Naive thymus-derived CD4-positive, alpha-beta T cell (primary cell): ENCODE measurements at regions of chr20 and their contacts with region 1.

Region 1: GRCh38 chr20:3209257-3209945 is at the start of gene ITPA:
- DNase-seq: peak; percentile 26 to 67 (median 42)
- ATAC-seq: peak; percentile 44
- H3K4me3 ChIP-seq: peak within 1 kb of the TSS; percentile 94
- H3K4me3 Mint-ChIP-seq: peak within 1 kb of the TSS; percentile 85 to 100 (median 96)
- H3K27ac ChIP-seq: peak within 1 kb of the TSS; percentile 85
- H3K27ac Mint-ChIP-seq: peak within 1 kb of the TSS; percentile 85 to 99 (median 94)
- H3K4me1 ChIP-seq: peaks cover 8 to 14% of the 10 kb centered on the region in 2 donors
- H3K4me1 Mint-ChIP-seq: peaks cover 20 to 38% (median 31%) of the 10 kb centered on the region in 7 donors
- H3K27me3 ChIP-seq: no peaks in the 10 kb centered on the region
- H3K27me3 Mint-ChIP-seq: no peaks in the 10 kb centered on the region
- total RNA-seq, gene ITPA: 37.7 to 71.2 (median 43.5) TPM

Region 2: DNA sequence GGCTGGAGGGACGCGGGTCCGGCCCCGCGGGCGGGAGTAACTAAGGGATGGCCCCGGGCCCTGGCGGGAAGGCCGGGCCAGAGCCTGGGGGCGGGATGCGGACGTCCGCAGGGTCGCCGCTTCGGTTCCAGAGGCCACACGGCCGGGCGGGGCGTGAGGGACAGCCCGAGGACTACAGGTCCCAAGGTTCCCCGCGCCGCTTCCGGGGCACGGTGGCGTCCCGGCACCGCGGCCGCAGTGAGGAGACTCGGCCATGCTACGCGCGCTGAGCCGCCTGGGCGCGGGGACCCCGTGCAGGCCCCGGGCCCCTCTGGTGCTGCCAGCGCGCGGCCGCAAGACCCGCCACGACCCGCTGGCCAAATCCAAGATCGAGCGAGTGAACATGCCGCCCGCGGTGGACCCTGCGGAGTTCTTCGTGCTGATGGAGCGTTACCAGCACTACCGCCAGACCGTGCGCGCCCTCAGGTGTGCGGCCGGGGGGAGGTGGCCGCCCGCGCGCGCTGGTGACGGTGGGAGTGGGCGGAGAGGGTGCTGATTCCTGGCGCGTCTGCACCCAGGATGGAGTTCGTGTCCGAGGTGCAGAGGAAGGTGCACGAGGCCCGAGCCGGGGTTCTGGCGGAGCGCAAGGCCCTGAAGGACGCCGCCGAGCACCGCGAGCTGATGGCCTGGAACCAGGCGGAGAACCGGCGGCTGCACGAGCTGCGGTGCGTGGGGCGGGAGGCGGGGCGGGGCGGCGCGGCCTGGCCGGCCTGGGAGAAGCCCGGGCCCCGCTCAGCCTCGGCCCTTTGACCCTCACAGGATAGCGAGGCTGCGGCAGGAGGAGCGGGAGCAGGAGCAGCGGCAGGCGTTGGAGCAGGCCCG is 163.4 kb before region 1 on chr20 and contains the start of gene MRPS26:
- CTCF ChIA-PET with region 1: no interaction called
- POLR2A ChIA-PET with region 1: no interaction called
- intact Hi-C with region 1: loop called (anchors 1 to 5 kb)
- DNase-seq: peak; percentile 63 to 89 (median 76)
- ATAC-seq: peak; percentile 93
- H3K4me3 ChIP-seq: peak within 1 kb of the TSS; percentile 91
- H3K4me3 Mint-ChIP-seq: peak within 1 kb of the TSS; percentile 82 to 95 (median 92)
- H3K27ac ChIP-seq: peak within 1 kb of the TSS; percentile 70
- H3K27ac Mint-ChIP-seq: peak within 1 kb of the TSS; percentile 69 to 90 (median 79)
- H3K4me1 ChIP-seq: peaks cover 4 to 11% of the 10 kb centered on the region in 2 donors
- H3K4me1 Mint-ChIP-seq: peaks cover 11 to 23% (median 18%) of the 10 kb centered on the region in 7 donors
- H3K27me3 ChIP-seq: no peaks in the 10 kb centered on the region
- H3K27me3 Mint-ChIP-seq: no peaks in the 10 kb centered on the region
- total RNA-seq, gene MRPS26: 22.2 to 41.6 (median 29.5) TPM

Region 3: DNA sequence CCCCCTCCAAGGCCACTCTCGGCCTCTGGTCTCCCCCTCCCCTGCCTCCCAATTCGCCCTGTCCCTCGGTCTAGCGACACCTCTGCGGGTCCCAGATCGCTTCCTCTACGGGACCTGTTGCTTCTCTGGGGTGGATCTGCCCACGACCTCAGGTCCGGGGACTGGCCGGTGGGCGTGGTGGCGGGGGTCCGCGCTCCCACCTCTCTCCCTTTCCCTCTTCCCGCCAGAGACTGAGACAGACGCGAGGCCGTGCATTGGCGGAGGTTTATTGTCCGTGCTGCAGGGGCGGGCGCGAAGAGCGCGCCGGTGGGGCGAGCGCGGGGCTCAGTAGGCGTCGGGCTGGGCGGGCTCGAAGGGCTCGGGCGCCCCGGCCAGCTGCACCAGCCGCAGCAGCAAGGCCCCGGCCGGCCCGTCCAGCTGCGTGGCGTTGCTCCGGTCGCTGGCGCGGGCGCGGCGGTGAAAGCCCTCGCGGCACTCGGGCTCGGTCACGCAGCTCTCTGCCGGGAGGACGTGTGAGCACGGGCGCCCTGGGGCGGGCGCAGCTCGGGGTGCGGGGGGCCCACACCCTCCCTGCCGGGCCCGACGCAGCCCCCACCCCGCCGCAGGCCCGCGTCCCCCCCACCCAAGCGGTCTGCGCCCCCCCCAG is 127.0 kb before region 1 on chr20:
- CTCF ChIA-PET with region 1: interaction called, 6 read pairs
- POLR2A ChIA-PET with region 1: no interaction called
- intact Hi-C with region 1: loop called in 1 of 2 experiments (anchors 5 kb)
- DNase-seq: peak in 1 of 9 donors; percentile 10
- ATAC-seq: peak; percentile 35
- H3K4me3 ChIP-seq: peak overlapping the region; percentile 24
- H3K4me3 Mint-ChIP-seq: peak overlapping the region; percentile 62 to 83 (median 72)
- H3K27ac ChIP-seq: no peak overlapping the region
- H3K27ac Mint-ChIP-seq: no peak overlapping the region
- H3K4me1 ChIP-seq: peaks cover 0 to 14% of the 10 kb centered on the region in 2 donors
- H3K4me1 Mint-ChIP-seq: peaks cover 11 to 19% (median 17%) of the 10 kb centered on the region in 7 donors
- H3K27me3 ChIP-seq: peaks cover 0 to 13% of the 10 kb centered on the region in 2 donors
- H3K27me3 Mint-ChIP-seq: peaks cover 8 to 62% (median 23%) of the 10 kb centered on the region in 5 donors